ENCODE measurements at regions of chr3 and their contacts with region 1.

Region 1: DNA sequence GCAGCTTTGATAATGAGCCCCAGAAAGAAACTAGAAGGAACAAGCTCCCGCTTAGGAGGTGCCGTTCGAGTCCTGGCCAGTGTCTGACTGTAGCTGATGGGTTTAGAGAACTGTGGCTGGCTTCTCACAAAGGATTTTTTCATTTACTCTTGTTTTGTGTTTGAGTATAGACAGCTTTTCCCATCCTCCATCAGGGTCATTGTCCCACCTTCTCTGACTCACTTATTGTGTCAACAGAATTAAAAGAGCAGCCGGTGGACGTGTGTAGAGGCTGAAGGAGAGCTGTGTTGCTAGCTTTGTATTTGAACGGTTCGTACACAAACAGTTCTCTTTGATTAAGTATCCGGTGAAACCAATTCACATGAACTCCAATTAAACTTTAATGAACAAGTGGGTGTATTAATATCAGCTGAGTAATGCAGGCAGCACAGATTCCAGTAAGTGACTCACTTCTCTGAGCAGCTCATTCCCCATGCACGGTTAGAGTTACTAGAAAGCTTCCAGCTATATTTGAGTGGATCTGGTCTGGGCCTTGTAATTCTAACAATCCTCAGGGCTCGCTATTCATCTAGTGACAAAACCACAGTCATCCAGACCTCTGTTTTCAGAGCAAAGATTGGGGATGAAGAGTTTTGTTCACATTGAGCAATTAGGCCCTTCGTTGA is 141.0 kb downstream of the LPP start:
- DNase-seq: peak; percentile 99
- ATAC-seq: peak; percentile 90
- H3K4me3 ChIP-seq: peak overlapping the region in 1 of 3 experiments; percentile 45; a peak in 2 of 6 replicates
- H3K27ac ChIP-seq: peak overlapping the region; percentile 94
- H3K4me1 ChIP-seq: peaks cover 99% of the 10 kb centered on the region
- H3K27me3 ChIP-seq: no peaks in the 10 kb centered on the region
- CTCF ChIP-seq: no peak
- EP300 ChIP-seq: peak; percentile 90 to 96; a peak in 3 of 4 replicates
- POLR2A ChIP-seq: peak; percentile 48 to 74; a peak in 3 of 4 replicates
- RAD21 ChIP-seq: peak; percentile 37; the same call in 1 of the 2 replicates

Region 2: GRCh38 chr3:188170461-188171459 is 124.2 kb before region 1 on chr3:
- CTCF ChIA-PET with region 1: no interaction called
- POLR2A ChIA-PET with region 1: no interaction called
- in situ Hi-C with region 1: no loop called
- intact Hi-C with region 1: loop called (anchors 5 kb)
- DNase-seq: peak; percentile 98
- ATAC-seq: peak; percentile 98
- H3K4me3 ChIP-seq: peak overlapping the region in 2 of 3 experiments; percentile 19 to 36; a peak in 3 of 6 replicates
- H3K27ac ChIP-seq: peak overlapping the region; percentile 83
- H3K4me1 ChIP-seq: peaks cover 96% of the 10 kb centered on the region
- H3K27me3 ChIP-seq: no peaks in the 10 kb centered on the region
- CTCF ChIP-seq: no peak
- EP300 ChIP-seq: peak; percentile 77 to 98; a peak in 3 of 4 replicates
- POLR2A ChIP-seq: no peak
- RAD21 ChIP-seq: no peak

Region 3: DNA sequence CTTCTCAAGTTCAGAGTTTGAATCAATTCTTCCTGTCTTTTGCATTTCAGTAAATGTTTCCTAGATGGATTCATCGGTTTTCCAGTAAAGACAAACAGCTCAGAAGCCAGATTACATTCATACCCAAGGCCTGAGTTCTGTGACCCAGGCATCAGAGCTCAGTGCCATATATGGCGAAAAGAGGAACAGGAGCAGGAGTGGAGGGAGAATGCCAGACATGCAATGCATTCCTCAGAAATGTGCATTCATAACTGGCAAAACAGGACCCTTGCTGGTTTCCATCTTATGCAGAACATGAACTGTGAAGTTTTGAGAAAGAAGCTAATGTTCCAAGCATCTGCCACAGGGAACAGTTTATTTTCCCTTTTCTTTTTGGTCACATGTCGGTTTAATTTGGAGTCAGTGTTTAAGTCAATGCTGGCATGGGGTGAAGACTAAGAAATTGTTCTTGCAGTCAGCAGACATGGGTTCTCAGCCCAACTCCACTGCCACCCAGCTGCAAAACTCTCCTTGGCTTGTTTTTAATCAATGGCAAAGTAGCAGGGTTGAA is 24.5 kb before region 1 on chr3:
- CTCF ChIA-PET with region 1: no interaction called
- POLR2A ChIA-PET with region 1: interaction called, 9 read pairs
- in situ Hi-C with region 1: no loop called
- intact Hi-C with region 1: loop called (anchors 2 kb)
- DNase-seq: peak; percentile 89
- ATAC-seq: peak; percentile 95
- H3K4me3 ChIP-seq: no peak overlapping the region
- H3K27ac ChIP-seq: no peak overlapping the region
- H3K4me1 ChIP-seq: peaks cover 84% of the 10 kb centered on the region
- H3K27me3 ChIP-seq: no peaks in the 10 kb centered on the region
- CTCF ChIP-seq: no peak
- EP300 ChIP-seq: peak in 1 of 2 experiments; percentile 73; a peak in 2 of 4 replicates
- POLR2A ChIP-seq: no peak
- RAD21 ChIP-seq: no peak

Region 4: GRCh38 chr3:188964957-188965356 is 670.0 kb after region 1 on chr3:
- CTCF ChIA-PET with region 1: no interaction called
- POLR2A ChIA-PET with region 1: no interaction called
- in situ Hi-C with region 1: no loop called
- intact Hi-C with region 1: no loop called
- DNase-seq: no peak
- ATAC-seq: no peak
- H3K4me3 ChIP-seq: no peak overlapping the region
- H3K27ac ChIP-seq: no peak overlapping the region
- H3K4me1 ChIP-seq: no peaks in the 10 kb centered on the region
- H3K27me3 ChIP-seq: no peaks in the 10 kb centered on the region
- CTCF ChIP-seq: no peak
- EP300 ChIP-seq: no peak
- POLR2A ChIP-seq: no peak
- RAD21 ChIP-seq: no peak